Activated CD4-positive, alpha-beta T cell treated with anti-CD3 and anti-CD28 coated beads, Interleukin-2, amount 10 ng/mL, durations not matched to agents 24 days and 14 days (primary cell): ENCODE measurements at regions of chr7 and their contacts with region 1.

Region 1: GRCh38 chr7:106887421-106887820 is 22.3 kb downstream of the PIK3CG start:
- DNase-seq: no peak
- H3K4me3 Mint-ChIP-seq: no peak overlapping the region
- H3K27ac Mint-ChIP-seq: peak overlapping the region; percentile 77
- H3K4me1 Mint-ChIP-seq: peaks cover 18% of the 10 kb centered on the region
- H3K27me3 Mint-ChIP-seq: no peaks in the 10 kb centered on the region

Region 2: DNA sequence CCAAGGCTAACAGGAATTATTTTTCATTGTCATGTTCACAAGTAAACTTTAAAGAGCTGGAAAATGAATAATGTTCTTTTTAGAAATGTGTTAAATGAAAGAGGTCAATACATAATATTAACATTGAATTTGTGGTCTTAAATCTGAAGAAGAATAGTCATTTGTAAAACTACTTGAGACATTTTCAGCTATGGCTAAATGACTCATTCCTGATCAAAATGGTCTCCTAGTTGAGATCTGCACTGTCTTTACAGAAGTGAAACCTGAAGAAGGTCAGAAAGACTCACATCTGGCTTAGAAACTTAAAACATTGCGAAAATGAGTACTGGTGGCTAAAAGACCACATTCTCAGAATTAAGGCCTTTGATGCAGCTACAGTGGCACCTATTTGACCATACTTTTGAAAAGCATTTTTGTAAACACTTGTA is 16.4 kb before region 1 on chr7:
- intact Hi-C with region 1: loop called (anchors 1 kb)
- DNase-seq: peak; percentile 63
- H3K4me3 Mint-ChIP-seq: peak overlapping the region; percentile 36
- H3K27ac Mint-ChIP-seq: peak overlapping the region; percentile 68
- H3K4me1 Mint-ChIP-seq: peaks cover 54% of the 10 kb centered on the region
- H3K27me3 Mint-ChIP-seq: no peaks in the 10 kb centered on the region

Region 3: DNA sequence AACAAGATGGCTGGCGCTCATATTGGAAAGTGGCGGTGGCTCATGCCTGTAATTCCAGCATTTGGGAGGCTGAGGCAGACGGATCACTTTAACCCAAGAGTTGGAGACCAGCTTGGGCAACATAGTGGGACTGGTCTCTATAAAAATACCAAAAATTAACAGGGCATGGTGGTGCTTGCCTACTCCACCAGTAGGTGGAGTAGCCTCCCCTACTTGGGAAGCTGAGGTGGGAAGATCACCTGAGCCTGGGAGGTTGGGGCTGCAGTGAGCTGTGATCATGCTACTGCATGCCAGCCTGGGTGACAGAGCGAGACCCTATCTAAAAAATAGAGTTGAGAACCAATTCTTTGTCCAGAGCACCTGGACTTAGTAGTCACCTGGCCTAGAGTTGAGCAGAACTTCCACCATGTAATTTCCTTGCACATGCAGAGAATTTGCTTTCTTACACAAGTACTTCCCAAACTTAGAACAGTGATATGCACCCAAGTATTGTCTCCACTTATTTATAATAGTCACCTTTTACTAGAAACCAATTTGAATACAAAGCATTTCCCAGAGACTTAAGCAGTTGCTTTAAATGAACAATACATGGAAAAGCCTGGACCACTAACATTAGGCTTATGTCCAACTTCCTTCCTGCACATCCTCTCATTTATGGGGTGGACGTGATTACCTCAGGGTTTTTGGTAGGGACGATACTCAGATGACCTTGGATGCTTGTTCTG is 1226.9 kb after region 1 on chr7:
- intact Hi-C with region 1: no loop called
- DNase-seq: peak; percentile 67
- H3K4me3 Mint-ChIP-seq: no peak overlapping the region
- H3K27ac Mint-ChIP-seq: no peak overlapping the region
- H3K4me1 Mint-ChIP-seq: no peaks in the 10 kb centered on the region
- H3K27me3 Mint-ChIP-seq: peaks cover 4% of the 10 kb centered on the region